BJ (cell line): ENCODE measurements at regions of chr9 and their contacts with region 1.

Region 1: GRCh38 chr9:136283291-136284235 is 20.3 kb downstream of the CCDC187 start:
- DNase-seq: no peak
- H3K4me3 ChIP-seq: no peak overlapping the region
- H3K27me3 ChIP-seq: peaks cover 2% of the 10 kb centered on the region
- CTCF ChIP-seq: peak; percentile 93

Region 2: GRCh38 chr9:136170006-136170901 is 113.3 kb before region 1 on chr9:
- CTCF ChIA-PET with region 1: interaction called, 20 read pairs
- POLR2A ChIA-PET with region 1: no interaction called
- DNase-seq: no peak
- H3K4me3 ChIP-seq: no peak overlapping the region
- H3K27me3 ChIP-seq: peaks cover 19% of the 10 kb centered on the region
- CTCF ChIP-seq: peak; percentile 78

Region 3: DNA sequence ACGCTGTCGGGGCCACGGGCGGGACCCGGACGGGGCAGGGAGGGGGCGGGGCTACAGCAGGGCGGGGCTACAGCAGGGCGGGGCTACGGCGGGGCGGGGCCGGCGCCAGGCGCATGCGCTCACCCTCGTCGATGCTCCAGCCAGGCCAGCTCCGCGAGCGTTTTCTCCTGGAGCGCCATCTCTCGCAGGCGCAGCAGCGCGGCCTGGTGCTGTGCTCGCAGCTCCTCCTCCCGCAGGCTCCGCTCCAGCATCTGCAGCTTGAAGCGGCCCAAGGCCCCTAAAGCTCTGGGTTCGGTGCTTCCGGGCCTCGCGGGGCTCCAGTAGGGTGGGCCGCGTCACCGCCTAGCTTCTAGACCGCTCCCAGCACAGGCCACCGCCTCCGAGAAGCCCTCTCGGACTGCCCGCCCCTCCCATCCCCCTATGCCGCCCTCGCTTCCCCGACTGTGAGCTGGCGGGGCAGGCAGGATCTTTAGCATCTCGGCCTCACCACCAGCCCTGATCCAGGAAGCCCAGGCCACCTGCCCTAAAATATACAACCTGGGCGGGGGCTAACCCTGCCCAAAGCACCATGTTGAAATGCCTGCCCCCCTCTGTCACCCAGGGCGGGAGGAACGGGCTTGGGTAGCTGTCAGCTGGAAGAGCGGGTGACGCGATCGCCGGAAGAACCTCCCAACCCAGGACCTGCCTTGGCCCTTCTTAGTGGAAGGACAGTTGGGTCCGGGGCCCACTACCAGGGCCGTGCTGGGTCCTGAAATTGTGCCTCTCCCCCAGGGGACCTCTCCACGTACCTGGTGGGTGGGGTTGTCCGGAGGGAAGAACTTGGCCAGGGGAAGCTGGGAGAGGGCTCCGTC is 16.1 kb before region 1 on chr9:
- CTCF ChIA-PET with region 1: interaction called, 15 read pairs
- POLR2A ChIA-PET with region 1: no interaction called
- DNase-seq: no peak
- H3K4me3 ChIP-seq: peak overlapping the region; percentile 47
- H3K27me3 ChIP-seq: peaks cover 11% of the 10 kb centered on the region
- CTCF ChIP-seq: peak; percentile 44

Region 4: DNA sequence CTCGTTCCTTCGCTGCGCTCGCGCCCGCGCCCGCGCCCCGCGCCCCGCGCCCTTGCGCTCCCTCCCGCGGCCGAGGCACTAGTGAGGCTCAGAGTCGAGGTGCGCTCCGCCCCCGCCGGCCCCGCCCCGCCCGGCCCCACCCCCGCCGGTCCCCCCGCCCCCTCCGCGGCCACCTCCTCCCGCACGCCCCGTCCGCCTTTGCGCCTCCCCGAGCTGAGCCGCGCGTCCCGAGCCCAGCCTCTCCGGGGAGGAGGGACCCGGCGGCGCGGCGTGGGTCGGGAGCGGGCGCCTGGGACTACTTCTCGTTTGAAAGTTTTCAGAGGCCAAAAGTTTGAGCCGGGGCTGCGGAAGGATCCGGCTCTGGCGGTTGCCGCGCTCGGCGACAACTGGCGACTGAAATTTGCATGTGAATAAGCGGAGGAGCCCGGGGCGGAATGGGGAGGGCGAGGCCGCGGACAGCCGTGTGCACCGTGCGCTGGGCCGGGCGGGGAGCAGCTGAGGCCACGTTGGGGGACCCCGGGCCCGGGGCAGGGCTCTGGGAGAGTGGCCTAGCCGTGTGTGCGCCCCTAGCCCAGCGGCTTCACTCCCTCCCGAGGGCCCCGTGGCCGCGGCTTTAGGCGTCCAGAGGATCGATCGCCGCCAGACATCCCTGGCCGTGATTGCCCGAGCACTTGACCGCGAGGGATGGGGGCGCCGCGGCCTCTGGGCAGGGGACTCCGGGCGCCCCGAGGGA is 262.6 kb after region 1 on chr9 and contains the start of gene NOTCH1:
- CTCF ChIA-PET with region 1: no interaction called
- POLR2A ChIA-PET with region 1: no interaction called
- DNase-seq: peak; percentile 49
- H3K4me3 ChIP-seq: peak within 1 kb of the TSS; percentile 76
- H3K27me3 ChIP-seq: no peaks in the 10 kb centered on the region
- CTCF ChIP-seq: no peak
- polyA plus RNA-seq, gene NOTCH1: 0.97 and 1.3 TPM in 2 replicates

Region 5: GRCh38 chr9:136820971-136821825 is 537.6 kb after region 1 on chr9:
- CTCF ChIA-PET with region 1: no interaction called
- POLR2A ChIA-PET with region 1: no interaction called
- DNase-seq: no peak
- H3K4me3 ChIP-seq: no peak overlapping the region
- H3K27me3 ChIP-seq: no peaks in the 10 kb centered on the region
- CTCF ChIP-seq: no peak